A549 (cell line): ENCODE measurements at regions of chr4 and their contacts with region 1.

Region 1: GRCh38 chr4:24594891-24595290 is 10.5 kb upstream of the DHX15 start:
- DNase-seq: peak; percentile 10 to 85
- ATAC-seq: peak; percentile 87 to 92
- H3K4me3 ChIP-seq: no peak overlapping the region
- H3K27ac ChIP-seq: peak overlapping the region; percentile 86 to 88
- H3K4me1 ChIP-seq: peaks cover 39% of the 10 kb centered on the region
- CTCF ChIP-seq: no peak
- EP300 ChIP-seq: peak; percentile 43 to 52; a peak in 2 of 5 replicates
- POLR2A ChIP-seq: no peak
- RAD21 ChIP-seq: peak; percentile 27 to 29; a peak in 3 of 5 replicates

Region 2: GRCh38 chr4:24150034-24150433 is 444.9 kb before region 1 on chr4:
- CTCF ChIA-PET with region 1: no interaction called
- POLR2A ChIA-PET with region 1: no interaction called
- DNase-seq: no peak
- ATAC-seq: no peak
- H3K4me3 ChIP-seq: no peak overlapping the region
- H3K27ac ChIP-seq: no peak overlapping the region
- H3K4me1 ChIP-seq: no peaks in the 10 kb centered on the region
- CTCF ChIP-seq: no peak
- EP300 ChIP-seq: no peak
- POLR2A ChIP-seq: no peak
- RAD21 ChIP-seq: no peak

Region 3: DNA sequence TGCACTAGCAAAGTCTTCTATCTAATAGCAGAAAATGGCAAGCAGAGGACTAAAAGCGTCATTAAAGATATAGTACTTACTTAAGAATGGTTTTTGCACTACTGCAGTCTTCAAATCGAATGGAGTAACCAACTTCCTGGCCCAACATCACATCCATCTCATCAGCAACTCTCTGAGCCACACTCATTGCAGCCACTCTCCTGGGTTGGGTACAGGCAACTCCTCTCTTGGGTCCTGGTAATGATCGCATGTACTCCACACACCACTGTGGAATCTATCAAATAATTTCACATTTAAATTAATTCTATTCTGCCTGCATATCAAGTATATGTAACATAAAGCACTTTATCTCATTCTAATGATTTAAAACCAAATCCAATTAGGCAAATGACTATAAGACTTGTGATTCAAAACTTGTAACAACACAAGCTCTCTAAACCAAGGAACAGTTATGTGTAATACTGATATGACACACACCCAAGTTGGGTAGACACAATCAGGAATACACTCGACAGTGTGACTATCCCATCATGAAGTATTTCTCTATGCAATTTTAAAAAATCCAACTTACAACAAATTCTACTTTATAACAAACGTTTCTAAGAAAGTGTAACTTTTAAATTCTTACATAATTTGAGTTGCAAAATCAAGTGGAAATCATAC is 24.2 kb before region 1 on chr4:
- CTCF ChIA-PET with region 1: no interaction called
- POLR2A ChIA-PET with region 1: no interaction called
- DNase-seq: no peak
- ATAC-seq: peak in 1 of 2 experiments; percentile 58; a peak in 3 of 6 replicates
- H3K4me3 ChIP-seq: no peak overlapping the region
- H3K27ac ChIP-seq: no peak overlapping the region
- H3K4me1 ChIP-seq: peaks cover 24% of the 10 kb centered on the region
- CTCF ChIP-seq: no peak
- EP300 ChIP-seq: no peak
- POLR2A ChIP-seq: no peak
- RAD21 ChIP-seq: no peak

Region 4: DNA sequence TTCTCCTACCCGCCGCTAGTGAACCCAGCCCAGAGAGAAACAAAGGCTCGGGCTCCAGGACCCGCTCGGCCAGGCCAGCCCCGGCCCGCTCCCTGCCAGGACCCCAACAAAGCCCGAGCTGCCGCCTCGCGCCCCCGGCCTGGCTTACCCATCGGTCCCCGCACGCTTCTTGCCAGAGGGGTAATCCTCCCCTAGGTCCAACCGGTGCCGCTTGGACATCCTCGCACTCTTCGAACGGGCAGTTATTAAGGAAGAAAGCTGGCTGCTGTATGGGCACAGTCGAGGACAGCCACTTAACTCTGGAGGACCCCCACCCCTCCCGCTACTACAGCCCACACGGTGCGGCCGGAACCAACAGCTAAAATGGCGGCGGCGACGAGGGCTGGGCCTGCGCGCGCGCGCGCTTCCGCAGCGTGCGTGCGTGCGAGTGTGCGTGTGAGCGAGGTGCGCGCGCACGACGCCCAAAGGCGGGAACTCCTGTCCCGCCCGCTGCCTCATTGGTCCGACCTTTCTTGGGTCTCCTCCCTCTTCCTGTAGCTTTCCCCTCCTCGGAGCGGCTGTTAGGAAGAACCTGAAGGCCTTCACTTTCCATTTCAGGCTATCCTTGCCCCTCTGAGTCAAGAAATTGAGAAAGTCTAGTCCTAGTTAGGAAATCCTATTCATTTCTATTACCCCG is 10.6 kb before region 1 on chr4 and contains the start of gene DHX15:
- CTCF ChIA-PET with region 1: no interaction called
- POLR2A ChIA-PET with region 1: interaction called, 11 read pairs
- DNase-seq: peak; percentile 71 to 97
- ATAC-seq: peak; percentile 93 to 95
- H3K4me3 ChIP-seq: peak within 1 kb of the TSS; percentile 95
- H3K27ac ChIP-seq: peak within 1 kb of the TSS; percentile 98 to 100
- H3K4me1 ChIP-seq: peaks cover 13% of the 10 kb centered on the region
- CTCF ChIP-seq: no peak
- EP300 ChIP-seq: no peak
- POLR2A ChIP-seq: peak; percentile 58
- RAD21 ChIP-seq: no peak
- polyA plus RNA-seq, gene DHX15: 171 and 189 TPM in 2 replicates

Region 5: DNA sequence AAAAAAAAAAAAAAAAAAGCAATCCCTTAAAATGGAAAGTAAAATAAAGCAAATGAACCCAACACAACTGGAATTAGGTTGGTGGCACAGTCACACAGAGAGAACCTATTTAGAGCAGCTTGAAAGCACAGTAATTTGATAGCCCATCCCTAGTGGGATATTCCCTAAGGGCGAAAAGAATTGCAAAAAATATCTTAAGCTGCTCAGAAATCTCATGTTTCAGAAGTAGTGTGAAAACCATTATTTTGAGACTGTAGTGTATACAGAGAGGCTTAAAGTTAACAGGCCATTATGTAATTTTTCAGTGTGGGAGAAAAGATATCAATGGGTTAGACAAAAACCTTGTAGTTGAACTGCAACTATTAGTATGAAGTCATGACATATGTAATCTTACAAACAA is 29.5 kb after region 1 on chr4:
- CTCF ChIA-PET with region 1: no interaction called
- POLR2A ChIA-PET with region 1: no interaction called
- DNase-seq: no peak
- ATAC-seq: no peak
- H3K4me3 ChIP-seq: no peak overlapping the region
- H3K27ac ChIP-seq: no peak overlapping the region
- H3K4me1 ChIP-seq: no peaks in the 10 kb centered on the region; the same call in 2 of the 3 replicates
- CTCF ChIP-seq: no peak
- EP300 ChIP-seq: no peak
- POLR2A ChIP-seq: no peak
- RAD21 ChIP-seq: no peak

Region 6: GRCh38 chr4:24799544-24800324 is 204.8 kb after region 1 on chr4:
- CTCF ChIA-PET with region 1: no interaction called
- POLR2A ChIA-PET with region 1: no interaction called
- DNase-seq: no peak
- ATAC-seq: no peak
- H3K4me3 ChIP-seq: no peak overlapping the region
- H3K27ac ChIP-seq: no peak overlapping the region
- H3K4me1 ChIP-seq: no peaks in the 10 kb centered on the region
- CTCF ChIP-seq: no peak
- EP300 ChIP-seq: no peak
- POLR2A ChIP-seq: no peak
- RAD21 ChIP-seq: no peak